Ovary (tissue), 10 donors: ENCODE measurements at regions of chr10 and their contacts with region 1.

Region 1: GRCh38 chr10:44932517-44933450 is 21.6 kb downstream of the TMEM72 start:
- DNase-seq: peak; percentile 80 to 91 (median 87)
- H3K4me3 ChIP-seq: no peak overlapping the region
- H3K27ac ChIP-seq: no peak overlapping the region
- H3K4me1 ChIP-seq: no peaks in the 10 kb centered on the region
- H3K27me3 ChIP-seq: no peaks in the 10 kb centered on the region
- CTCF ChIP-seq: peak; percentile 68 to 85 (median 76)
- EP300 ChIP-seq: no peak
- POLR2A ChIP-seq: peak; percentile 18

Region 2: DNA sequence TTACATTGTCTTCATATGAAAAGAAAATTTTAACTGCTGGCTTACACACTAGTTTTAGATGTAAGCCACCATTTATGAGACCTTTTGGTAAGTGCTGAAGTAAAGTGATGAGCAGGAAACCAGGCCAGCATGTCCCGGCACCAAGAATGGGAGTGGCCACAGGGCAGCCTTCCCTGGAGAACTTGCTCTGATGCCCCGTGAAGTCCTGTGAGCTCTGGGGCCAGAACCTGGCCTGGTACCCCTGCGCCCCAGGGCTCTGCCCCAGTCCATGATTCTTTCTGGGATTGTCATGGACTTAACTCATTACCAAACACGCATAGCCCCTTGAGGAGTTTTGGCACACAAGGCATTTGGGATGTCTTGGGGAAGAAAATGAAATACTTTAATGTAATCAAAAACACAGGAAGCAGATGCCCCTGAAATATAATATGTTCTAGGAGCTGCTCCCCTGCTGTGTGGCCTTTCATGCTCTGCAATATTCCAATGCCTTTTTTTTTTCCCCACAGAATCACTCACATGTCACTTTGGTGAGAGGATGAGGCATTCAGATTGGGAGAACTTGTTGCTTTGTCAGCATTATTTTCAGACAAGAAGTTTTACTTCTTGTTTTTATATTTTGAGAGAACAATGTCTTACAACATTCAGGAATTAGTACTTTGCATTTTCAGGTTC is 494.8 kb before region 1 on chr10:
- intact Hi-C with region 1: no loop called
- DNase-seq: no peak
- H3K4me3 ChIP-seq: no peak overlapping the region
- H3K27ac ChIP-seq: no peak overlapping the region
- H3K4me1 ChIP-seq: no peaks in the 10 kb centered on the region
- H3K27me3 ChIP-seq: no peaks in the 10 kb centered on the region
- CTCF ChIP-seq: no peak
- EP300 ChIP-seq: no peak
- POLR2A ChIP-seq: no peak

Region 3: GRCh38 chr10:44959247-44960087 is 26.7 kb after region 1 on chr10 and contains the start of gene RASSF4:
- intact Hi-C with region 1: loop called in 1 of 4 experiments (anchors 2 kb)
- DNase-seq: peak; percentile 90 to 94 (median 92)
- H3K4me3 ChIP-seq: peak within 1 kb of the TSS; percentile 71
- H3K27ac ChIP-seq: peak within 1 kb of the TSS; percentile 33 to 73
- H3K4me1 ChIP-seq: peaks cover 8% of the 10 kb centered on the region
- H3K27me3 ChIP-seq: no peaks in the 10 kb centered on the region
- CTCF ChIP-seq: no peak
- EP300 ChIP-seq: no peak
- POLR2A ChIP-seq: peak; percentile 62
- total RNA-seq, gene RASSF4: 4.8 to 21.9 (median 7.3) TPM

Region 4: DNA sequence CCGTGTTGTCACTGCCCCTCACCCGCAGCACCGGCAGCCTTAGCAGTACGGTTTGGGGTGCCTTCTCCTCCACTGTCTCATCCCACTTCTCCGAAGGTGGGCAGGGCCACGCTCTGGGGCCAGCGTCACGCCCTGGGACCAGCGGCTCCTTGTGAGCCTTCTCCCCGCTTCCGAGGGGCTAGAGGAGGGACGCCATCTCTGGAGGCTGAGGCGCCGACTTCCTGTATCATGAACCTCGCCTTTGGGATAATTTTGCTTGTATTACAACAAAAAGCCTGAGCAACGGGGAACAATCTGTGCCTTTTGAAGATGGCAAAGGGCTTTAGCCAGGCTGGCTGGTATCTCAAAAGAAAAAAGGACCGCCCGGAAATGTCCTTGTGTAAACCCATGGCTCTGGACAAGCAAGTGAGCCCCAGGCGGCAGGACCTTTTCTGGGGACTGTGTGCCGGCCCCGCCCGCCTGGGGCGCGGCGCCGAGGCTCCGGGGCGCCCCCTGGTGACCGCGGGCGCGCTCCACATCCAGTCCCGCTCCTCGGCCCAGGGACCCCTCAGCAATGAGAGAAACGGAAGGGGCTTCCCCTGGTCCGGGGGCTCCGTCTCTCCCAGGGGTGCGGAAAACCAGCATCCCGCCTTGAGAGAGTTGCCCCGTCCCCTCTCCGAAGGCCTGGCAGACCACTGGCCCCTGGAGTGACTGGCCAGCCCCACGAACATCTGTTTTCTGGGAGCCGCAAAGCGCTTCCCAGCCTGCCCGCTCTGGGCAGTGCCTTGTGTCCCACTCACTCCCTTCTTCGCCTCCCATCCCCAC is 42.0 kb after region 1 on chr10:
- intact Hi-C with region 1: loop called in 2 of 4 experiments (anchors 1 to 2 kb)
- DNase-seq: peak; percentile 73 to 86 (median 78)
- H3K4me3 ChIP-seq: peak overlapping the region; percentile 69
- H3K27ac ChIP-seq: peak overlapping the region; percentile 73 to 84
- H3K4me1 ChIP-seq: peaks cover 24% of the 10 kb centered on the region
- H3K27me3 ChIP-seq: no peaks in the 10 kb centered on the region
- CTCF ChIP-seq: peak; percentile 91 to 96 (median 95)
- EP300 ChIP-seq: no peak
- POLR2A ChIP-seq: peak; percentile 32

Region 5: GRCh38 chr10:45008524-45009161 is 75.9 kb after region 1 on chr10:
- intact Hi-C with region 1: loop called in 1 of 4 experiments (anchors 10 kb)
- DNase-seq: peak in 2 of 5 donors; percentile 9 to 38
- H3K4me3 ChIP-seq: no peak overlapping the region
- H3K27ac ChIP-seq: no peak overlapping the region
- H3K4me1 ChIP-seq: no peaks in the 10 kb centered on the region
- H3K27me3 ChIP-seq: no peaks in the 10 kb centered on the region
- CTCF ChIP-seq: peak; percentile 54 to 79 (median 73)
- EP300 ChIP-seq: no peak
- POLR2A ChIP-seq: no peak

Region 6: GRCh38 chr10:45058580-45058979 is 125.8 kb after region 1 on chr10:
- intact Hi-C with region 1: no loop called
- DNase-seq: no peak
- H3K4me3 ChIP-seq: no peak overlapping the region
- H3K27ac ChIP-seq: no peak overlapping the region
- H3K4me1 ChIP-seq: no peaks in the 10 kb centered on the region
- H3K27me3 ChIP-seq: no peaks in the 10 kb centered on the region
- CTCF ChIP-seq: no peak
- EP300 ChIP-seq: no peak
- POLR2A ChIP-seq: no peak